ENCODE measurements at regions of chr5 and their contacts with region 1.

Region 1: DNA sequence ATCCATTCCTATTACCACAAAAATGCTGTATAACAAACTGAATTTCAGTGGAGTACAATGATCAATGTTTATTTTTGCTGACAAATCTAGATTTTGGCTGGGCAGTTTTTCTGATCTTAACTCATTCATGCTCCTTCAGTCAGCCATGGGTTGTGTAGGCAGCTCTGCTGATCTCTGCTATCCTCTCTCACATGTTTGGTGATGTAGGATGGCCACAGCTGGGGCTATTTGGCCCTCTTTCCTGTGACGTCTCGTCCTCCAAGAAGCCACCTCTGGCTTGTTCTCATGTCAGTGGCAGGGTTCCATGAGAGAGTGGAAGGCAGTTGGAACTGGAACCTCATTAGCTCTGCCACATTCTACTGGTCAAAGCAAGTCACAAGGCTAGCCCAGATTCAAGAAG is 8.9 kb downstream of the NLN start:
- H3K4me3 ChIP-seq: no peak overlapping the region
- H3K27ac ChIP-seq: no peak overlapping the region
- H3K4me1 ChIP-seq: no peaks in the 10 kb centered on the region
- CTCF ChIP-seq: no peak

Region 2: DNA sequence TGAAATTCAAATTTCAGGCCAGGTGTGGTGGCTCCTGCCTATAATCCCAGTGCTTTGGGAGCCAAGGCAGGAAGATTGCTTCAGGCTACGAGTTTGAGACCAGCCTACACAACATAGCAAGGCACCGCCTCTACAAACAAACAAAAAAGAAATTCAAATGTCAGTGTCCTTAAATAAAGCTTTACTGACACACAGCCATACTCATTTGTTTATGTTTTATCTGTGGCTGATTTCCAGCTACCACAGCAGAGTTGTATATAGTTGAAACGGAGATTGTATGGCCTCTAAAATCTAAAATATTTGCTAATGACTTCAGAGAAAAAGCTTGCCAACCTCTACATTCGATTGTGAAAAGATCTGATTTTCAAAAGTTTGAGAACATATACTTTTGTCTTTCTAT is 90.7 kb before region 1 on chr5:
- CTCF ChIA-PET with region 1: no interaction called
- POLR2A ChIA-PET with region 1: no interaction called
- H3K4me3 ChIP-seq: no peak overlapping the region
- H3K27ac ChIP-seq: no peak overlapping the region
- H3K4me1 ChIP-seq: no peaks in the 10 kb centered on the region
- CTCF ChIP-seq: no peak

Region 3: DNA sequence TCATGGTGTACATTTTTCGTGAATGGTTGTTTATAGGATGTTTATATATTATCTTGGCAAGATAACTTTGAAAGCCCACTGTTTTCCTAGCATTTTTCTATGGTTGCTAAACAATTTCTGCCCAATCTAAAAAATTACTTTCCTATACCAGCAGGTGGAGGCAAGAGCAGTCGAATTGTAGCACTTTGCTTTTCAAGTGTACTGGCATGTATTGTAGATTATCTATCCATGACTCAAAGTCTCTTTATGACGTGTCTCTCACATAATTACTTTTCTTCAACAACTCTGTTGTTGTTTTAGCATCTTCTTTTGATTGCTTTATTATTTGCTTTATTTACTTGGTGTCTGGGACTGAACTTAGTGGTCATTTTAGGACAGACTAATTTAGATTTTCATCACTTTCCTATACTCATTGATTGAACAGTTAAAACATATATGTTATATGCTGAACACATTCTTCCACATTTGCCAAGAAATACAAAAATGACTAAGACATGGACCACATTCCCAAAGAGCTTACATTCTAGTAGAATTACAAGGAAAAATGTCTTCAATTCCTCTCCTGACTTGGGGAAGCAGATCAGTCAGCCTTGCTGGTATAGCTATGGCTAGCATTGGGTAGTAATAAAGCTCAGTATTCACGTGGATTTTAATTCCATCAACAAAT is 11.8 kb after region 1 on chr5:
- CTCF ChIA-PET with region 1: interaction called, 14 read pairs
- POLR2A ChIA-PET with region 1: no interaction called
- H3K4me3 ChIP-seq: no peak overlapping the region
- H3K27ac ChIP-seq: no peak overlapping the region
- H3K4me1 ChIP-seq: no peaks in the 10 kb centered on the region
- CTCF ChIP-seq: peak; percentile 41; the same call in 1 of the 2 replicates

Region 4: DNA sequence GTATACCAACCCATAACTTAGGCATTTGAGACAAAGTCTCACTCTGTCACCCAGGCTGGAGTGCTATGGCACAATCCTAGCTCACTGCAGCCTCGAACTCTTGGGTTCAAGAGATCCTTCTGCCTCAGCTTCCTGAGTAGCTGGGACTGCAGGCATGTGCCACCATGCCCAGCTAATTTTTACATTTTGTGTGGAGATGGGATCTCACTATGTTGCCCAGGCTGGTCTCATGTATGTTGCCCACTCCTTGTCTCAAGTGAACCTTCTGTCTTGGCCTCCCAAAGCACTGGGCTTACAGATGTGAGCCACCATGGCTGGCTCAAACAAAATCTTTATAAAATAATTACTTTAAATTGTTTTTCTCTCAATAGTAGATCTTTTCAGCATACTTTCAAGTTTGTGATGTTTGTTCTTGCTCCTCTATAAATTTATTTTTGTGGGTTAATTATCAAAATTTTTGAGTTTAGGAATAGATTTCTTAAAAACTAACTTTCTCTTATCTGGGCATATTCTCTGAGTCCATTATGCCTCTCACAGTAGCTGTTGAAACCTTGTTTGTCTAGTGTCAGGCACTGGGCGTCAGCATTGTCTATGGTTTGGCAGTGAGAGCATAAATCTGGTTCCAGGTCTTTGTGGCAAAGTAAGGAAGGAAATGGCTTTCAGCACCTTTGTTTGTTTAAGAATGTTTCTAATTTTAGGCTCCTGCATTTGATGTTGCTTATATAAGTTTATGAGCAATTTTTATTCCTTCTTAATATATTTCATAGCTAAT is 29.8 kb after region 1 on chr5:
- CTCF ChIA-PET with region 1: no interaction called
- POLR2A ChIA-PET with region 1: no interaction called
- H3K4me3 ChIP-seq: no peak overlapping the region
- H3K27ac ChIP-seq: no peak overlapping the region
- H3K4me1 ChIP-seq: no peaks in the 10 kb centered on the region
- CTCF ChIP-seq: no peak

Measured in HEK293 (cell line).